ENCODE measurements at regions of chr3 and their contacts with region 1.

Region 1: DNA sequence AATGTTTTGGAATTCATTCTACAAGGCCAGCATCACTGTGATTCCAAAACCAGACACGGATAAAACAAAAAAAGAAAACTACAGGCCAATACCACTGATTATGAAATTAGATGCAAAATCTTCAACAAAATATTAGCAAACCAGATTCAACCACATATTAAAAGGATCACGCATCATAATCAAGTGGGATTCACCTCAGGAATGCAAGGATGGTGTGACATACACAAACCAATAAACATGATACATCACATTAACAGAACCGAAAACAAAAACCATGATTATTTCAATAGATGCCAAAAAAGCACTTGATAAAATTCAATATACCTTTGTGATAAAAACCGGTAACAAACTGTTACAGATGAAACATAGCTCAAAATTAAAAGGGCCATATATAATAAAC is 48.9 kb downstream of the DLG1 start:
- DNase-seq: no peak
- H3K4me3 ChIP-seq: no peak overlapping the region
- H3K27ac ChIP-seq: no peak overlapping the region
- H3K4me1 ChIP-seq: no peaks in the 10 kb centered on the region
- H3K27me3 ChIP-seq: no peaks in the 10 kb centered on the region
- CTCF ChIP-seq: no peak
- POLR2A ChIP-seq: no peak

Region 2: GRCh38 chr3:196502775-196503195 is 746.8 kb before region 1 on chr3:
- intact Hi-C with region 1: no loop called
- DNase-seq: peak; percentile 60 to 80 (median 78)
- H3K4me3 ChIP-seq: peak overlapping the region; percentile 80 to 95 (median 90)
- H3K27ac ChIP-seq: peak overlapping the region; percentile 91 to 98 (median 98)
- H3K4me1 ChIP-seq: peaks cover 12 to 25% of the 10 kb centered on the region in 2 donors
- H3K27me3 ChIP-seq: no peaks in the 10 kb centered on the region
- CTCF ChIP-seq: peak in 1 of 6 experiments; percentile 8
- POLR2A ChIP-seq: peak in 1 of 2 donors; percentile 67

Region 3: DNA sequence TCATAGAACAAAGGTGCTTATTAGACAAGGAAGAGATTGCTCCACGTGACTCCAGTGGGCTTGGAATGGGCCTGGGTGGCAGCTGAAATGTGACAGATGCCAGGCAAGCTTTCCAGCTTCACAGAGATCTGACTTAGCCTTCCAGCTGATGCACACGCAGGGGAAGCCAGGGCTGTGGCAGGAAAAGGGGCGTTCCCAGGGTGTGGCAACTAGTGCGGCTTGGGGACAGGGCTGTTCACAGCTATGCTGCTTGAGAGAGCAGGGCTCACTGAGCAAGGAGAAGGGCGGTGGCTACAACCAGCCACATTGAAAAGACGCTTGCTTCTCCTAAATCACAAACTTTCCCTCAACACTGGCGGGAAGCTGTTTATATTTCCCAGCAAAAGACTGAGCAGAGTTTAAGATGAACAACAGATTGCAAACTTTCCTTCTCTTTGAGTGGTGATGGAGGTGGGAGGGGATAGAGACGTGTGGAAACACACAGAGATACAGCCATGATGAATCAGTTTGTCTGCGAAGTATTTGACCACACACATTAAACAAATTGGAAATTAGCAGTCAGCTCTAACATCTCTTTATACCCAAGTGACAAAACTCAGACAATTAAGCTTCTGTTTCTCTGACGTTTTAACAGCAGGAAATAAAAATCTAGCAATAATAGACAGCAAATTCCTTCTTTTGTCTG is 178.7 kb after region 1 on chr3:
- intact Hi-C with region 1: no loop called
- DNase-seq: peak in 4 of 7 donors; percentile 11 to 70 (median 24)
- H3K4me3 ChIP-seq: peak overlapping the region in 1 of 4 donors; percentile 2
- H3K27ac ChIP-seq: no peak overlapping the region
- H3K4me1 ChIP-seq: peaks cover 0 to 5% of the 10 kb centered on the region in 2 donors
- H3K27me3 ChIP-seq: no peaks in the 10 kb centered on the region
- CTCF ChIP-seq: no peak
- POLR2A ChIP-seq: peak in 1 of 2 donors; percentile 10

Region 4: GRCh38 chr3:197504239-197505121 is 254.9 kb after region 1 on chr3:
- intact Hi-C with region 1: loop called in 1 of 2 experiments (anchors 5 kb)
- DNase-seq: no peak
- H3K4me3 ChIP-seq: no peak overlapping the region
- H3K27ac ChIP-seq: peak overlapping the region in 1 of 5 donors; percentile 3
- H3K4me1 ChIP-seq: no peaks in the 10 kb centered on the region
- H3K27me3 ChIP-seq: no peaks in the 10 kb centered on the region
- CTCF ChIP-seq: no peak
- POLR2A ChIP-seq: no peak